A549 (cell line): ENCODE measurements at regions of chr9 and their contacts with region 1.

Region 1: GRCh38 chr9:130973169-130973936 is 34.3 kb upstream of the FIBCD1 start:
- DNase-seq: no peak
- ATAC-seq: peak; percentile 28 to 31
- H3K4me3 ChIP-seq: no peak overlapping the region
- H3K27ac ChIP-seq: no peak overlapping the region
- H3K4me1 ChIP-seq: no peaks in the 10 kb centered on the region
- CTCF ChIP-seq: no peak
- EP300 ChIP-seq: no peak
- POLR2A ChIP-seq: no peak
- RAD21 ChIP-seq: no peak

Region 2: DNA sequence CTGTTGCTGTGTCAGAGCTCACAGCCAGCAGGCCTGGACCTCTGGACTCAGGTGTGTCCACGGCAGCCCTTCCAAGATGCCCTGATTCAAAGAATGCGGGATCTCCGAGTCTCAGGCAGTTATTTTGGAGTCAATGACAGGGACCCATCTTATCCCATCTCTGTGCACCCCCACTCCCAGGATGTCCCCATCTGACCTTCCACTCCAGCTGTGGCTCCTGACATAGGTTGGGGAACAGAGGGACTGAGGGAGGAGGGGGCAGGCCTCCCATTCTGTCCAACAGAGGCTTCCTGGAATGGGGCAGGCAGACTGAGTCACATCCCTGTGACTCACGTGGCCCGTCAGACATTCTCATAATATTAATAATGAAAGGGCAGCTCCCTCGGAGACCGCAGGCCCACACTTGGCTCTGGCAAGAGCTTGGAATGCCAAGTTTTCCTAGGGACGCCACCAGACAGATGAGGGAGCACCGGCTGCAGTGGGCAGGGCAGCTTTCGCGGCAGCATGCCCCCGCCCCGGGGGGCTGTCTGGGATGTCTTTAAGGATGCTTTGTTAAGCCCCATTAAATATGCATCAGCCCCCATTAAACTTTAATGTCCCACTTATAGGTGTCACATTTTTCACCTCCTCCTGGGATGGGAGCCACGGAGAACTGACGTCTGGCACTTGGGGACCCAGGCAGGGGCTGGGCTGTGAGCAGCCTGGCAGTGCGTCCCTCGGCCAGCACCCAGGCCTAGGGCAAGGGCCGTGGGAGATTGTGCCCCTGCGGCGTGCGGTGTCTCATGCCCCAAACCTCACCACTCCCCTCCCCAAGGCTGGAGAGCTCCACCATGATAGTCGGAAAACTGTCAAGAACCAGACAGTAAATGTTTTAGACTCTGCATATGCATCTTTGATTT is 10.7 kb before region 1 on chr9:
- CTCF ChIA-PET with region 1: interaction called, 14 read pairs
- POLR2A ChIA-PET with region 1: interaction called, 3 read pairs
- DNase-seq: peak; percentile 82 to 95
- ATAC-seq: peak; percentile 98
- H3K4me3 ChIP-seq: no peak overlapping the region
- H3K27ac ChIP-seq: peak overlapping the region; percentile 83 to 90
- H3K4me1 ChIP-seq: peaks cover 16% of the 10 kb centered on the region
- CTCF ChIP-seq: no peak
- EP300 ChIP-seq: no peak
- POLR2A ChIP-seq: no peak
- RAD21 ChIP-seq: no peak; a peak in 1 of 5 replicates